H1 (cell line): ENCODE measurements at regions of chr3 and their contacts with region 1.

Region 1: DNA sequence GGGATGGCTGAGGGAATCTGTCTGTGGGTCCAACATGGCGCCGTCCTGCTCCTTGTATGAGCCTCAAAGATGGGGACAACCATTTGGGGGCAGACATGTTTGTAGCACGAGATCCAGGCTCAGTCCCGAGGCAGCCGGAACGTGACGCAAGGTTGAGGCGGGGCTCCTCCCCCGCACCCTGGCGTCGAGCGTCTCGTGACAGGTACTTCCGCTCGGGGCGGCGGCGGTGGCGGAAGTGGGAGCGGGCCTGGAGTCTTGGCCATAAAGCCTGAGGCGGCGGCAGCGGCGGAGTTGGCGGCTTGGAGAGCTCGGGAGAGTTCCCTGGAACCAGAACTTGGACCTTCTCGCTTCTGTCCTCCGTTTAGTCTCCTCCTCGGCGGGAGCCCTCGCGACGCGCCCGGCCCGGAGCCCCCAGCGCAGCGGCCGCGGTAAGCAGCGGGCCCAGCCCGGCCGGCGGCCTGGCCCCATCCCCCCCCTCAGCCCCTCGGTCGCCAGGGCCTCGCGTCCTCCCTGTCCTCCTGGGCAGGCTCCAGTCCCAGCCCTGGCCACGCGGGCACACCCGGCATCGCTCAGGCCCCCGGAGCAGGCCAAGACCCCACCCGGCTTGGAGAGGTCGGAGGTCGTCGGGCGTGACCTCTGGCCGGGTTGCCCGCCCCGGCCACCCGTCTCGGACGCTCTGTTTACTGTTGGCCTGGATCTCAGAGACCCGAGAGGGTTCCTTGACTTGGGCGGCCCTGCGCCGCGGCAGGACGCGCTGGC is at the start of gene RAB7A:
- DNase-seq: peak; percentile 93 to 96
- H3K4me3 ChIP-seq: peak within 1 kb of the TSS; percentile 80 to 94 (median 91)
- H3K27ac ChIP-seq: peak within 1 kb of the TSS; percentile 88
- H3K4me1 ChIP-seq: peaks cover 6 to 32% (median 21%) of the 10 kb centered on the region in 4 experiments
- H3K27me3 ChIP-seq: no peaks in the 10 kb centered on the region
- CTCF ChIP-seq: no peak
- EP300 ChIP-seq: peak in 1 of 2 experiments; percentile 59; a peak in 2 of 3 replicates
- POLR2A ChIP-seq: peak; percentile 91 to 98
- RAD21 ChIP-seq: no peak
- total RNA-seq, gene RAB7A: 185 and 195 TPM in 2 replicates

Region 2: DNA sequence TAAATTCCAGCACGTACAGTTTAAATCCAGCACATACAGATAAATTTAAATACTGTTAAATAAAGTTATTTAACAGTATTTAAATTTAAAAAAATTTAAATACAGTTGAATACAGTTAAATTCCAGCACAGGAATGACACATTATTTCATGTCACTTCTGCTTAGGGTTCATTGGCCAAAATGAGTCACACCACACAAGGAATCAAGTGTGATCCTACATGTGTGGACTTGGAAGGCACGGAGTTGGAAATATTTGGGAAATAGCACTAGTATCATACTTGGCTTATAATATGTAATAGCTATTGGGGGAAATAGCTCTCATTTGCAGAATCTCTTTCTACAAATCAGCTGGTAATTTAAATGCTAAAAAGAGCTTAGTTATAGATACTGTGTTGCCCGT is 10.5 kb after region 1 on chr3:
- CTCF ChIA-PET with region 1: interaction called, 5 read pairs
- POLR2A ChIA-PET with region 1: interaction called, 11 read pairs
- DNase-seq: no peak
- H3K4me3 ChIP-seq: no peak overlapping the region
- H3K27ac ChIP-seq: no peak overlapping the region
- H3K4me1 ChIP-seq: no peaks in the 10 kb centered on the region; a peak in 1 of 7 replicates
- H3K27me3 ChIP-seq: no peaks in the 10 kb centered on the region
- CTCF ChIP-seq: no peak
- EP300 ChIP-seq: no peak
- POLR2A ChIP-seq: no peak
- RAD21 ChIP-seq: no peak

Region 3: DNA sequence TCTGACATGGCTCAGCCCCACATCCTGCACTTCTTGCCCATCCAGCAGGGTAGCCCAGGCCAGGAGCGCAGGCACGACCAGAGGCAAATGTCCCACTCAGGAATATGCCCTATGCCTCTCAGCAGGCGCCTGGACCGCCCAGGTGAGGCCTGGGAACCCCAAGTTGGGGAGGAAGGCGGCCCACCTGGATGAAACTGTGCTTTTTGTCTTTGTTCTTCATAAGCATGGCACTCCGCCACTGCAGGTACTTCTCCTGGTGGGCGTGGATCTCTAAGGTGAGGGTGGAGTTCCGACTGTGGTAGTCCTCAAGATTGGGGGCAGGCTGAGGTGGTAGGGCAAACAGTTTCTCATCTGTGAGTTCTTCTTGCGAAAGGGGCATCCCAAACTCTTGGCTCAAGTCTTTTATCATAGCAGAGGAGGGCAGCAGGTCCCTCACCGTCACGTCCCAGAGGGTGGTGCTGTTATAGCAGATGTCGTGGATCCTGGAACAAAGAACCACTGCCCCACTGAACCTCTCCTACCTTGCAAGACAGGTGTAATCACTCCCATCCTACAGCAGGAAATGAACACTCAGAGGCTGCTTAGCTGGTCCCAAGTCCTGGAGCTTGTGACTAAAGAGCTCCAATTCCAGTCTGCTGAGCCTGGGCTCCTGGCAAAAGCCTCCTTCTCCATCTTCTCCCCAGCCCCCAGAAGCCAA is 206.6 kb after region 1 on chr3:
- CTCF ChIA-PET with region 1: no interaction called
- POLR2A ChIA-PET with region 1: no interaction called
- DNase-seq: peak in 1 of 2 experiments; percentile 33
- H3K4me3 ChIP-seq: no peak overlapping the region
- H3K27ac ChIP-seq: no peak overlapping the region
- H3K4me1 ChIP-seq: no peaks in the 10 kb centered on the region
- H3K27me3 ChIP-seq: no peaks in the 10 kb centered on the region
- CTCF ChIP-seq: no peak
- EP300 ChIP-seq: no peak
- POLR2A ChIP-seq: no peak
- RAD21 ChIP-seq: no peak